Psoas muscle (tissue), 8 donors: ENCODE measurements at regions of chr3 and their contacts with region 1.

Region 1: DNA sequence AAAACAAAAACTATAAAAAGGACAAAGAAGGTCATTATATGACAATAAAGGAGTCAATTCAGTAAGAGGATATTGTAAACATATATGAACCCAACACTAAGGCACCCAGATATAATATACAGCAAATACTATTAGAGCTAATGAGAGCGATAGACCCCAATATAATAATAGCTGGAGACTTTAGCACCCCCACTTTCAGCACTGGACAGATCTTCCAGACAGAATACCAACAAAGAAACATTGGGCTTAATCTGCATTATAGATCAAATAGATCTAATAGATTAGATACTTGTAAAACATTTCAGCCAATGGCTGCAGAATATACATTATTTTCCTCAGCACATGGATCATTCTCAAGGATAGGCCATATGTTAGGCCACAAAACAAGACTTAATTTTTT is 53.4 kb downstream of the NUDT16 start:
- DNase-seq: no peak
- ATAC-seq: no peak
- H3K4me3 ChIP-seq: no peak overlapping the region
- H3K27ac ChIP-seq: no peak overlapping the region
- H3K4me1 ChIP-seq: no peaks in the 10 kb centered on the region
- H3K27me3 ChIP-seq: no peaks in the 10 kb centered on the region
- CTCF ChIP-seq: no peak

Region 2: GRCh38 chr3:131421957-131422498 is 13.0 kb before region 1 on chr3:
- intact Hi-C with region 1: loop called in 1 of 2 experiments (anchors 1 kb)
- DNase-seq: no peak
- ATAC-seq: no peak
- H3K4me3 ChIP-seq: no peak overlapping the region
- H3K27ac ChIP-seq: no peak overlapping the region
- H3K4me1 ChIP-seq: no peaks in the 10 kb centered on the region
- H3K27me3 ChIP-seq: no peaks in the 10 kb centered on the region
- CTCF ChIP-seq: no peak